ENCODE measurements at regions of chr11 and their contacts with region 1.

Region 1: GRCh38 chr11:60913793-60914632 is at the start of gene TMEM109:
- DNase-seq: peak; percentile 79 to 95 (median 86)
- ATAC-seq: peak; percentile 63 to 68
- H3K4me3 Mint-ChIP-seq: peak within 1 kb of the TSS; percentile 97 to 100 (median 98)
- H3K27ac Mint-ChIP-seq: peak within 1 kb of the TSS; percentile 91 to 100 (median 98)
- H3K4me1 Mint-ChIP-seq: peaks cover 25 to 86% (median 67%) of the 10 kb centered on the region in 4 donors
- H3K27me3 Mint-ChIP-seq: peaks cover 0 to 1% (median 0%) of the 10 kb centered on the region in 5 donors
- polyA plus RNA-seq, gene TMEM109: 216 to 295 (median 272) TPM

Region 2: DNA sequence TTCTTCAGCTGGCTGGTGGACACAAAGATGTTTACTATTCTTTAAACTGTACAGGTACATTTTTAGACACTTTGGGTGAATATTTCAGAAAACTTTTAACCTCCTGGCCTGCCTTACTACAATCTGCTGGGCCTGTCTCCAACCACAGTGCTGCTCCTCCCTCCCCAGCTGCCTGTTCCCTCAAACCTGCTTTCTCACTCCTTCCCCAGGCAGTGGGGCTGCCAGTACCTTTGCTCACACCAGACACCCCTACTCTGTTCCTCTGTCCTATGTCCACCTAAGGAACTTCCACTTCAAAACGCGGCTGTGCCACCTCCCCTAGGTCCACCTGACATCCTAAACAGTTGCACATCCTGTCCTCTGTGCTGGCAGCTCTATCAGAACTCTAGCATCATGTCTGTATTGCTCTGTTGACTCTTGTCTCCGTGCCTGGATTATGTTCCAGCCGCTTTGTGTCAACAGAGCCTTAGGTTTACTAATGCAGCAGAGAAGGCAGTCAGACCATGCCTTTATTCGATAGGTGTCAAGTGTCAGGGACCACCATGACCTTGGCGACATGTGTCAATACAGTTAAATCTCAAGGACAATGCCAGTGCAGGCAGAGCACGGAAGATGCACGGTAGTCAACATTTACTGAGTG is 33.2 kb before region 1 on chr11:
- POLR2A ChIA-PET with region 1: no interaction called
- DNase-seq: no peak
- ATAC-seq: no peak
- H3K4me3 Mint-ChIP-seq: no peak overlapping the region
- H3K27ac Mint-ChIP-seq: peak overlapping the region in 3 of 10 donors; percentile 8 to 92 (median 79)
- H3K4me1 Mint-ChIP-seq: peaks cover 0 to 14% (median 8%) of the 10 kb centered on the region in 4 donors
- H3K27me3 Mint-ChIP-seq: no peaks in the 10 kb centered on the region

Region 3: GRCh38 chr11:60924110-60924905 is 10.3 kb after region 1 on chr11 and contains the start of gene TMEM132A:
- POLR2A ChIA-PET with region 1: interaction called, 23 read pairs
- DNase-seq: peak in 3 of 10 donors; percentile 8 to 24 (median 22)
- ATAC-seq: peak; percentile 43 to 71
- H3K4me3 Mint-ChIP-seq: peak within 1 kb of the TSS; percentile 59 to 81 (median 72)
- H3K27ac Mint-ChIP-seq: peak within 1 kb of the TSS in 3 of 10 donors; percentile 25 to 29 (median 27)
- H3K4me1 Mint-ChIP-seq: peaks cover 13 to 20% (median 17%) of the 10 kb centered on the region in 4 donors
- H3K27me3 Mint-ChIP-seq: peaks cover 0 to 20% (median 9%) of the 10 kb centered on the region in 5 donors
- polyA plus RNA-seq, gene TMEM132A: not detected

Region 4: DNA sequence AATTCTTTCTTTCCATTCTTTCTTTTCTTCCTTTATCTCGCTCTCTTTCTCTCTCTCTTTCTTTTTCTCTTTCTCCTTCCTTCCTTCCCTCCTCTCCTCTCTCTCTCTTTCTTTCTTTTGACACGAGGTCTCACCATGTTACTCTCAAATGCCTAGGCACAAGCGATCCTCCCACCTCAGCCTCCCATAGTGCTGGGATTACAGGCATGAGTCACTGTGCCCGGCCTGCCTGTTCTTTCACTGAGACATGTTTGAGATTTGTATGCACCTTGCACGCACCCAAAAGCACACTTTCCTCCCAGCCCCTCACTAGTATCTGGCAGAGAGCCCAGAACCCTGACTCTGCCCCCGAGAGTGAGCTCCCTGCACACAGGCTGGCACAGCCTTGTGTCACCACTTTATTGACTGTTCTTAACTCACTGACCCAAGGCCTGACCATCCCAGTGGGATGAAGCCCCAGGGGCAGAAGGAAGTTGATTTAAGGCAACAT is 114.3 kb after region 1 on chr11:
- POLR2A ChIA-PET with region 1: interaction called, 12 read pairs
- DNase-seq: peak; percentile 44 to 84 (median 57)
- ATAC-seq: peak; percentile 7 to 31
- H3K4me3 Mint-ChIP-seq: peak overlapping the region; percentile 78 to 98 (median 86)
- H3K27ac Mint-ChIP-seq: peak overlapping the region; percentile 95 to 99 (median 98)
- H3K4me1 Mint-ChIP-seq: peaks cover 41 to 90% (median 80%) of the 10 kb centered on the region in 4 donors
- H3K27me3 Mint-ChIP-seq: no peaks in the 10 kb centered on the region